ENCODE measurements at regions of chr10 and their contacts with region 1.

Region 1: GRCh38 chr10:26556748-26557640 is 118.9 kb downstream of the APBB1IP start:
- DNase-seq: no peak
- H3K4me3 ChIP-seq: no peak overlapping the region
- H3K27ac ChIP-seq: no peak overlapping the region
- H3K4me1 ChIP-seq: peaks cover 0 to 14% (median 3%) of the 10 kb centered on the region in 4 donors
- H3K27me3 ChIP-seq: peaks cover 0 to 6% (median 0%) of the 10 kb centered on the region in 3 donors
- CTCF ChIP-seq: peak; percentile 26 to 78 (median 66)
- EP300 ChIP-seq: no peak
- POLR2A ChIP-seq: no peak

Region 2: GRCh38 chr10:25875556-25876165 is 681.3 kb before region 1 on chr10:
- intact Hi-C with region 1: loop called (anchors 5 kb)
- DNase-seq: no peak
- H3K4me3 ChIP-seq: no peak overlapping the region
- H3K27ac ChIP-seq: no peak overlapping the region
- H3K4me1 ChIP-seq: no peaks in the 10 kb centered on the region
- H3K27me3 ChIP-seq: no peaks in the 10 kb centered on the region
- CTCF ChIP-seq: peak in 3 of 4 experiments; percentile 39 to 70 (median 49)
- EP300 ChIP-seq: no peak
- POLR2A ChIP-seq: no peak

Region 3: GRCh38 chr10:26269754-26270153 is 287.2 kb before region 1 on chr10:
- intact Hi-C with region 1: no loop called
- DNase-seq: no peak
- H3K4me3 ChIP-seq: no peak overlapping the region
- H3K27ac ChIP-seq: no peak overlapping the region
- H3K4me1 ChIP-seq: no peaks in the 10 kb centered on the region
- H3K27me3 ChIP-seq: peaks cover 0 to 3% (median 0%) of the 10 kb centered on the region in 3 donors
- CTCF ChIP-seq: no peak
- EP300 ChIP-seq: no peak
- POLR2A ChIP-seq: no peak

Region 4: GRCh38 chr10:26334932-26335573 is 221.9 kb before region 1 on chr10:
- intact Hi-C with region 1: loop called (anchors 5 kb)
- DNase-seq: peak; percentile 65
- H3K4me3 ChIP-seq: peak overlapping the region in 1 of 4 donors; percentile 1
- H3K27ac ChIP-seq: no peak overlapping the region
- H3K4me1 ChIP-seq: no peaks in the 10 kb centered on the region
- H3K27me3 ChIP-seq: no peaks in the 10 kb centered on the region
- CTCF ChIP-seq: peak; percentile 22 to 60 (median 38)
- EP300 ChIP-seq: no peak
- POLR2A ChIP-seq: no peak

Measured in sigmoid colon (tissue), 7 donors.